IMR-90 (cell line): ENCODE measurements at regions of chr16 and their contacts with region 1.

Region 1: DNA sequence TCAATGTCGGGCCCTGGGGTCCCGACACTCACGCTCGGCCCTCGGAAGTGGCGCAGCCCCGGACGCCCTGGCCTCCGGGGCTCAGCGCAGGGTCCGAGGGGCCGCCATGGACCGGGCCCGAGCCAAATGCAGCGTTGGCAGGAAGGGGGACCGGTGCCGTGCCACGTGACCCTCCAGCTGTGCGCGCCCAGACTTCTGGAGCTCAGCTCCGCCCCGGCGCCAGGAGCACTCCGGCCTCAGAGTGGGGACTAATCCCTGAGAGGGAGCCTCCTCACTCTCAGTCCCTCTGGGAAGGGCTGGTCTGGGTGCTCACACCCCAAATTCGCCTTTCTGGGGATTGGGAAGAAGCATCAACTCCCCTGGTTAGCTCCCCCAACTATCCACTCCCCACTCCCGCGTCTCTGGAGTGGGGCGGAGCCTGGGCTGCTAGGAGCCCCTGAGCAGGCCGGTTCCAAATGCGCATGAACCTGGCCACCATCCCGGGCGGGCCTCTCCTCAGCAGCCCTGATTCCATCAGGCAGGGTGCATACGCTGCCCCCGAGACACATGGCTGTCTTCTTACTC is at the start of gene B3GNT9:
- DNase-seq: peak; percentile 66
- ATAC-seq: peak; percentile 78
- H3K4me3 ChIP-seq: peak within 1 kb of the TSS; percentile 76
- H3K27ac ChIP-seq: peak within 1 kb of the TSS; percentile 92
- H3K4me1 ChIP-seq: peaks cover 6% of the 10 kb centered on the region; the same call in 1 of the 2 replicates
- H3K27me3 ChIP-seq: no peaks in the 10 kb centered on the region
- CTCF ChIP-seq: no peak
- POLR2A ChIP-seq: no peak
- RAD21 ChIP-seq: no peak
- total RNA-seq, gene B3GNT9: 5.0 and 5.3 TPM in 2 replicates

Region 2: GRCh38 chr16:66911112-66911511 is 239.8 kb before region 1 on chr16:
- CTCF ChIA-PET with region 1: no interaction called
- POLR2A ChIA-PET with region 1: no interaction called
- dilution Hi-C with region 1: no loop called
- in situ Hi-C with region 1: no loop called
- intact Hi-C with region 1: no loop called
- DNase-seq: no peak
- ATAC-seq: no peak
- H3K4me3 ChIP-seq: no peak overlapping the region
- H3K27ac ChIP-seq: no peak overlapping the region
- H3K4me1 ChIP-seq: no peaks in the 10 kb centered on the region
- H3K27me3 ChIP-seq: peaks cover 18% of the 10 kb centered on the region
- CTCF ChIP-seq: no peak
- POLR2A ChIP-seq: no peak
- RAD21 ChIP-seq: no peak

Region 3: GRCh38 chr16:67017810-67018488 is 133.0 kb before region 1 on chr16:
- CTCF ChIA-PET with region 1: interaction called, 15 read pairs
- POLR2A ChIA-PET with region 1: no interaction called
- dilution Hi-C with region 1: no loop called
- in situ Hi-C with region 1: no loop called
- intact Hi-C with region 1: loop called (anchors 2 kb)
- DNase-seq: peak; percentile 95
- ATAC-seq: peak; percentile 75
- H3K4me3 ChIP-seq: no peak overlapping the region
- H3K27ac ChIP-seq: no peak overlapping the region
- H3K4me1 ChIP-seq: peaks cover 9% of the 10 kb centered on the region
- H3K27me3 ChIP-seq: peaks cover 2% of the 10 kb centered on the region; the same call in 1 of the 2 replicates
- CTCF ChIP-seq: peak; percentile 89
- POLR2A ChIP-seq: no peak
- RAD21 ChIP-seq: peak; percentile 91

Region 4: GRCh38 chr16:67091906-67092566 is 58.9 kb before region 1 on chr16:
- CTCF ChIA-PET with region 1: no interaction called
- POLR2A ChIA-PET with region 1: no interaction called
- dilution Hi-C with region 1: no loop called
- in situ Hi-C with region 1: no loop called
- intact Hi-C with region 1: no loop called
- DNase-seq: peak; percentile 86
- ATAC-seq: peak; percentile 85
- H3K4me3 ChIP-seq: no peak overlapping the region
- H3K27ac ChIP-seq: no peak overlapping the region
- H3K4me1 ChIP-seq: peaks cover 6% of the 10 kb centered on the region
- H3K27me3 ChIP-seq: no peaks in the 10 kb centered on the region
- CTCF ChIP-seq: no peak
- POLR2A ChIP-seq: no peak
- RAD21 ChIP-seq: no peak

Region 5: DNA sequence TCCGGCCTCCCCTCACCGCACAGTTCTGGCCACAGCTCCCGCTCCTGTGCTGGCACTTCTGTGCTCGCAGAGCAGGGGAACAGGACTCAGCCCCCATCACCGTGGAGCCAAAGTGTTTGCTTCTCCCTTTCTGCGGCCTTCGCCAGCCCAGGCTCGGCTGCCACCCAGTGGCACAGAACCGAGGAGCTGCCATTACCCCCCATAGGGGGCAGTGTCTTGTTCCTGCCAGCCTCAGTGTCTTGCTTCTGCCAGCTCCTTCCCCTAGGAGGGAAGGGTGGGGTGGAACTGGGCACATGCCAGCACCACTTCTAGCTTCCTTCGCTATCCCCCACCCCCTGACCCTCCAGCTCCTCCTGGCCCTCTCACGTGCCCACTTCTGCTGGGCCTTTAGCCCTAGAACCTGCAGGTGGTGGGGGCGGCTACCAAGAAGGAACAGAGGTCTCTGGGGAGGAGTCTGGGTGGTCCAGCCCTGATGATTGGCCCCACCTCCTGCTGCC is 47.4 kb after region 1 on chr16:
- CTCF ChIA-PET with region 1: no interaction called
- POLR2A ChIA-PET with region 1: no interaction called
- dilution Hi-C with region 1: no loop called
- in situ Hi-C with region 1: no loop called
- intact Hi-C with region 1: no loop called
- DNase-seq: peak; percentile 29
- ATAC-seq: peak; percentile 64
- H3K4me3 ChIP-seq: no peak overlapping the region
- H3K27ac ChIP-seq: no peak overlapping the region
- H3K4me1 ChIP-seq: peaks cover 2% of the 10 kb centered on the region; the same call in 1 of the 2 replicates
- H3K27me3 ChIP-seq: no peaks in the 10 kb centered on the region
- CTCF ChIP-seq: peak; percentile 77
- POLR2A ChIP-seq: no peak
- RAD21 ChIP-seq: peak; percentile 50